K562 (cell line): ENCODE measurements at regions of chr5 and their contacts with region 1.

Region 1: GRCh38 chr5:173283318-173284288 is 44.6 kb downstream of the STC2 start:
- DNase-seq: peak; percentile 76 to 81 (median 80)
- ATAC-seq: peak; percentile 99
- H3K4me3 ChIP-seq: no peak overlapping the region
- H3K27ac ChIP-seq: no peak overlapping the region
- H3K4me1 ChIP-seq: peaks cover 4 to 13% of the 10 kb centered on the region in 2 experiments; a peak in 4 of 5 replicates
- H3K27me3 ChIP-seq: peaks cover 12 to 23% of the 10 kb centered on the region in 2 experiments; a peak in 4 of 5 replicates
- CTCF ChIP-seq: peak; percentile 70 to 88 (median 72)
- EP300 ChIP-seq: no peak
- POLR2A ChIP-seq: no peak
- RAD21 ChIP-seq: peak; percentile 54 to 84

Region 2: DNA sequence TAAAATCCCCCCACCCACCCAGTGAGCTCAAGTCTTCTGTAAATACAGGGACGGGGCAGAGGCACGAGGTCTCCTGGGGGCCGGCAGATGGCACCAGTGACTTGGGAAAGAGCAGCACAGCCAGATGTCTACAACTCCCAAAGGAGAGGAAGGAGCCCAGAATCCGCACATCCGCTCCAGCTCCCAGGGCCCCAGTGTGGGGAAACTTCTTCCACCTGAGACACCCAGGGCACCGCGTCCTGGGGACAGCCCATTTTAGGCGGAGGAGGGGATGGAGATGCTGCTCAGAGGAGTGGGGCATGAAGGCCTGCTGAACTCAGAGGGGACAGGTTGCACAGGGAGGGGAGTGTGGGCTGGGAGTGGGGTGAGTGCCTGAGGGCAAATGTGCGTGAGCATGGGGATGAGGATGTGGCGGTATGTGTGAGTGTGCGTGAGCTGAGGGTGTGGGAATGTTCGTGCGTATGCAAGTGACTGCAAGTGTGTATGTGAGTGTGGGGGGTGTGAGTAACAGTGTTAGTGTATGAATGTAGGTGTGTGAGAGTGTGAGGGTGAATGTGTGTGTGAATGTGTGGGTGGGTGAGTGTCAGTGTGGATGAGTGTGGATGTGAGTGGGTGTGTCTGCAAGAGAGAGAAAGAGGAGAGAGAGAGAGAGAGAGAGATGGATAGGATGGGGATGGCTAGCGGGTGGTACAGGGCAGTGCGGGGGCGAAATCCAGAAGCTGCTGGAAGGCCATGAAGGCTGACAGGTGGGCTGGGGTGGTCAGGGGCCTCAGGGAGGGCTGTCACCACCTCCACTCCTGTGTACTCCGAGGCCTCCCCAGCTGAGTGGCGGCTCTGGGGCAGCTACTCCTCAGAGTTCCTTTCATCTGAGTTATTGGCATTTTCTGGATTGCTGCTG is 576.1 kb before region 1 on chr5:
- CTCF ChIA-PET with region 1: interaction called, 3 read pairs
- POLR2A ChIA-PET with region 1: no interaction called
- in situ Hi-C with region 1: loop called (anchors 10 kb)
- intact Hi-C with region 1: loop called (anchors 5 kb)
- DNase-seq: peak in 2 of 4 experiments; percentile 37 to 68
- ATAC-seq: peak; percentile 90
- H3K4me3 ChIP-seq: no peak overlapping the region
- H3K27ac ChIP-seq: no peak overlapping the region
- H3K4me1 ChIP-seq: peaks cover 4 to 9% of the 10 kb centered on the region in 2 experiments; a peak in 3 of 5 replicates
- H3K27me3 ChIP-seq: peaks cover 2 to 33% of the 10 kb centered on the region in 2 experiments; a peak in 4 of 5 replicates
- CTCF ChIP-seq: peak; percentile 67 to 79 (median 72)
- EP300 ChIP-seq: no peak
- POLR2A ChIP-seq: no peak
- RAD21 ChIP-seq: peak; percentile 62 to 78

Region 3: DNA sequence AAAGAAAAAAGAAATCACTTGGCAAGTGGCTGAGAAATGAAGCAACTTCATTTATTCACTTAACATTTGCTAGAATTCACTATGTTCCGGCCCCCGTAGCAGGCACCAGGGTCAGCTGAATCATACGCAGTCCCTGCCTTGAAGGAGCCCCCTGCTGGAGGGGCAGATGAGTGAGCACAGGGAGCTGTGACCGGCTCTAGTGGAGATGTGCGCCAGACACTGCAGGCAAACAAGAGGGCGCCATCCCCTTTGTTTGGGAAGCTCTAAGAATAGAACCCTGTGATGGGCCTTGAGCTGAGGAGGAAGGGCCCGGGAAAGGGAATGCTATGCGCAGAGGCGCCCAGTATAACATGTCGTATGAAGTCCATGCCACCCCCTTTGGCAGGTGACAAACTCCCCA is 344.5 kb before region 1 on chr5:
- CTCF ChIA-PET with region 1: no interaction called
- POLR2A ChIA-PET with region 1: no interaction called
- in situ Hi-C with region 1: no loop called
- intact Hi-C with region 1: loop called (anchors 5 kb)
- DNase-seq: peak; percentile 43 to 67 (median 62)
- ATAC-seq: peak; percentile 91
- H3K4me3 ChIP-seq: no peak overlapping the region
- H3K27ac ChIP-seq: no peak overlapping the region
- H3K4me1 ChIP-seq: peaks cover 7 to 12% of the 10 kb centered on the region in 2 experiments; a peak in 4 of 5 replicates
- H3K27me3 ChIP-seq: no peaks in the 10 kb centered on the region
- CTCF ChIP-seq: peak; percentile 82 to 95 (median 86)
- EP300 ChIP-seq: no peak
- POLR2A ChIP-seq: no peak
- RAD21 ChIP-seq: peak in 1 of 2 experiments; percentile 68; a peak in 2 of 4 replicates

Region 4: GRCh38 chr5:173165177-173166016 is 118.2 kb before region 1 on chr5:
- CTCF ChIA-PET with region 1: interaction called, 3 read pairs
- POLR2A ChIA-PET with region 1: no interaction called
- in situ Hi-C with region 1: no loop called
- intact Hi-C with region 1: loop called (anchors 2 kb)
- DNase-seq: no peak
- ATAC-seq: no peak
- H3K4me3 ChIP-seq: no peak overlapping the region
- H3K27ac ChIP-seq: no peak overlapping the region
- H3K4me1 ChIP-seq: no peaks in the 10 kb centered on the region
- H3K27me3 ChIP-seq: peaks cover 3 to 4% of the 10 kb centered on the region in 2 experiments; a peak in 2 of 5 replicates
- CTCF ChIP-seq: no peak
- EP300 ChIP-seq: no peak
- POLR2A ChIP-seq: no peak
- RAD21 ChIP-seq: no peak